A673 (cell line): ENCODE measurements at regions of chr11 and their contacts with region 1.

Region 1: GRCh38 chr11:65888163-65888814 is at the start of gene FIBP:
- DNase-seq: peak; percentile 100
- H3K4me3 ChIP-seq: peak within 1 kb of the TSS; percentile 72
- H3K27ac ChIP-seq: peak within 1 kb of the TSS; percentile 85
- H3K4me1 ChIP-seq: peaks cover 39% of the 10 kb centered on the region
- H3K27me3 ChIP-seq: no peaks in the 10 kb centered on the region
- CTCF ChIP-seq: peak; percentile 97
- total RNA-seq, gene FIBP: 98.5 and 116 TPM in 2 replicates

Region 2: DNA sequence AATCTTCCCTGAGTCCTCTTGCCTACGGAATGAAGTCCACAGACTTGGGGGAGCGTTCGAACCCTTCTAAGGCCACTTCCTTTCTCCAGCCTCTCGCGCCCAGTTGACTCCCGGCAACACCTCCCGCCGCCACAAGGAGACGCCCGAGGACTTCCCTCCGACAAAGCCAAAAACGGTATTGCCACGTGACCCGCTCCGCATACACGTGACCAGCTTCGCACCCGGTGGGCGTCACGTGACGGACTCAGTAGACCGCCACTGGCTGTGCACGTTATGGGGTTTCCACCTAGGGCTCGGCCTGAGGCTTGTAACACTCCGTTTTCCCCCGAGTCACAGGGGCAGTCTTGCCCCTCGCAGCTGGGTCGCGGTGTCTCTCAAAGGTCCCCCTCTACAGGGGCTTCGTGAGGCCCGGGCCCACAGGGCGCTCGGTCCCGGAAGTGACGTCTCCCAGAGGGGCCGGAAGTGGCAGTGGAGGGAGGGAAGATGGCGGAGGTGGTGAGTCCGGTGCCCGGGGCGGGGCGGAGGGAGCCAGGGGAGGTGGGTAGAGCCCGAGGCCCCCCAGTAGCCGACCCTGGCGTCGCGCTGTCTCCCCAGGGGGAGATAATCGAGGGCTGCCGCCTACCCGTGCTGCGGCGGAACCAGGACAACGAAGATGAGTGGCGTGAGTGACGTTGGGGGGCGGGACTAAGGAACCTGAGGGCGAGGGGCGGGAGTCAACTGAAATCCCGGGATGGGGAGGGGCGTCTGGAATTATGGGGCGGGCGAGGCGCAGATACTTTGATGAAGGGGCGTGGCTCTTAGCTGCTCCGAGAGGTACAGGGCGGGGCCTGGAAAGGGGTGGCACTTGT is 176.3 kb before region 1 on chr11 and contains the start of gene KAT5:
- CTCF ChIA-PET with region 1: interaction called, 11 read pairs
- POLR2A ChIA-PET with region 1: no interaction called
- intact Hi-C with region 1: no loop called
- DNase-seq: peak; percentile 100
- H3K4me3 ChIP-seq: peak within 1 kb of the TSS; percentile 58
- H3K27ac ChIP-seq: peak within 1 kb of the TSS; percentile 99
- H3K4me1 ChIP-seq: peaks cover 10% of the 10 kb centered on the region
- H3K27me3 ChIP-seq: no peaks in the 10 kb centered on the region
- CTCF ChIP-seq: peak; percentile 98
- total RNA-seq, gene KAT5: 68.1 and 71.3 TPM in 2 replicates

Region 3: GRCh38 chr11:65868076-65868667 is 20.1 kb before region 1 on chr11:
- CTCF ChIA-PET with region 1: interaction called, 16 read pairs
- POLR2A ChIA-PET with region 1: no interaction called
- intact Hi-C with region 1: no loop called
- DNase-seq: peak; percentile 73
- H3K4me3 ChIP-seq: no peak overlapping the region
- H3K27ac ChIP-seq: no peak overlapping the region
- H3K4me1 ChIP-seq: peaks cover 23% of the 10 kb centered on the region
- H3K27me3 ChIP-seq: no peaks in the 10 kb centered on the region
- CTCF ChIP-seq: no peak

Region 4: DNA sequence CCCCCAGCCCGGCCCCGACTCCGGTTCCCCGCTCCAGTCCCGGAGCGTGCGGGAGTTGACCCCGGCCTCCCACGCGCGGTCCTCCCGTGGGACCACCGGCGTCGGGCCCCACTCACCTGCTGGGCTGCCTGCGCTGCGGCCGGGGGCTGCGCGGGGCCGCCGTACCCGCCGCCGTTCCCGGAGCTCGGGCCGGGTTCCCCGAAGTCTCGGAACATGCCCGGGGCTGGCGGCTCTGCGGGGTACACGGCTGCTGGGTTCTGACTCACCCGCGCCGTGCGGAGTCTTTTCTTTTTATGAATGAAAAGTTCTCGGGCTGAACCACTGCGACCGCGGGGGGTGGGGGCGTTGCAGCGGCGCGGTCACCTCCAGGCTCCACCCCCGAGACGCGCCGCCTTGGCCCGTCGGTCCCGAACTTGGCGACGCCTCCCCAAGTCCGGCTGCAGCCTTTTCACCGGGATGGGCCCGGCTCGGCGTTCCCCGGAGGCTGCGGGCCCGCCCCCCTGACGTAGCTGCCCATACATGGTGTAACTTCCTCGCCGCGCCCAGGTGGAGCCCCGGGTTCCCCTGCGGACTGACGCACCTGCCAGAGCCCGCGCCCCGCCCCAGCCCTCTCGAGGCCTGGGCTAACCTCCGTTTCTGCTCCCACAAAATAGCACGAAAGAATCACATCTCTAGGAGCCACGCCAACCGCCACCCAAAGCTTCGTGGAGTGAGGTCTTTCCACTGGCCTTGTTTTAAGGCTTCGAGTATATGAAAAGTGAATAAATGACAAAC is 12.0 kb after region 1 on chr11 and contains the start of gene FOSL1:
- CTCF ChIA-PET with region 1: interaction called, 11 read pairs
- POLR2A ChIA-PET with region 1: interaction called, 13 read pairs
- intact Hi-C with region 1: no loop called
- DNase-seq: peak; percentile 94
- H3K4me3 ChIP-seq: peak within 1 kb of the TSS; percentile 65
- H3K27ac ChIP-seq: peak within 1 kb of the TSS; percentile 47
- H3K4me1 ChIP-seq: peaks cover 6% of the 10 kb centered on the region
- H3K27me3 ChIP-seq: no peaks in the 10 kb centered on the region
- CTCF ChIP-seq: no peak
- total RNA-seq, gene FOSL1: 12.6 and 29.0 TPM in 2 replicates

Region 5: DNA sequence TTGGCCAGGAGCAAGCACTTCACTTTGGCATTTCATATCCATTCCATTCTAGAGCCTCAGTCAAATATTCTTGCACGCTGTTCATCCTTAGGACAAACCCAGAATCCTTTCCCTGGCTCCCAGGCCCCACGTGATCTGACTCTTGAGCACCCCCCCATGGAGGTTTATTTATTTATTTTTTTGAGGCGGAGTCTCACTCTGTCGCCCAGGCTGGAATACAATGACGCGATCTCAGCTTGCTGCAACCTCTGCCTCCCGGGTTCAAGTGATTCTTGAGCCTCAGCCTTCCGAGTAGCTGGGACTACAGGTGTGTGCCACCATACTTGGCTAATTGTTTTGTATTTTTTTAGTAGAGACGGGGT is 44.2 kb after region 1 on chr11:
- CTCF ChIA-PET with region 1: interaction called, 13 read pairs
- POLR2A ChIA-PET with region 1: no interaction called
- intact Hi-C with region 1: no loop called
- DNase-seq: peak; percentile 75
- H3K4me3 ChIP-seq: no peak overlapping the region
- H3K27ac ChIP-seq: no peak overlapping the region
- H3K4me1 ChIP-seq: no peaks in the 10 kb centered on the region
- H3K27me3 ChIP-seq: no peaks in the 10 kb centered on the region
- CTCF ChIP-seq: no peak; the same call in 1 of the 2 replicates

Region 6: GRCh38 chr11:65944767-65945166 is 56.5 kb after region 1 on chr11:
- CTCF ChIA-PET with region 1: no interaction called
- POLR2A ChIA-PET with region 1: no interaction called
- intact Hi-C with region 1: no loop called
- DNase-seq: no peak
- H3K4me3 ChIP-seq: no peak overlapping the region
- H3K27ac ChIP-seq: no peak overlapping the region
- H3K4me1 ChIP-seq: no peaks in the 10 kb centered on the region
- H3K27me3 ChIP-seq: no peaks in the 10 kb centered on the region
- CTCF ChIP-seq: no peak

Region 7: DNA sequence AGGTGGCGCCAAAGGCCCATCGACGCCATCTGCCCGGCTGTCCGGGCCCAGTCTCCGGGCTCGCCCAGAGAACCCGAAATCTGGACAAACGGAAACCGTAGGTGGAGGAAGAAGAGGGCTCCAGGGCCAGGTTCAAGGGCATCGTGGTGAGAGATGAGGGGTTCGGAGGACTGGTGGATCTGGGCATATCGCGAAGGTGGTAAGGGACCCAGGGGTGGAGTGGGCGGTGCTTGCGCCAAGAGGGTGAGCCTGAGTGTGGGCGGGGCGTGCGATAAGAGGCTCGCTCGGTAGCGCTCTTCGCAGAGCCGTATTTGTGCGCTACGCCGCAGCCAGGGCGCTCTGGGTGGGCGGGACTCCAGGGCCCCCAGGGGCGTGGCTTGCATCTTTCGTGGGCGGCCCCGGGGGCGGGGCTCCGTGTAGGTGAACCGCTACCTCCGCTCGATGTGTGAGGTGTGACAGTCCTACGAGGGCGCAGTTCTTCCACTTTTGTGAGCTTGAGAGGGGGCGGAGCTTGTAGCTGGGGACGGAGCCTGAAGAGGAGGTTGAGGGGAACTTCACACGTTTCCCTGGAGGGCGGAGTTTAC is 423.8 kb after region 1 on chr11:
- CTCF ChIA-PET with region 1: no interaction called
- POLR2A ChIA-PET with region 1: interaction called, 11 read pairs
- intact Hi-C with region 1: no loop called
- DNase-seq: peak; percentile 98
- H3K4me3 ChIP-seq: peak overlapping the region; percentile 55
- H3K27ac ChIP-seq: peak overlapping the region; percentile 90
- H3K4me1 ChIP-seq: peaks cover 48% of the 10 kb centered on the region
- H3K27me3 ChIP-seq: no peaks in the 10 kb centered on the region
- CTCF ChIP-seq: peak; percentile 98